ENCODE measurements at regions of chr21 and their contacts with region 1.

Region 1: GRCh38 chr21:26842976-26843932 is 2.0 kb downstream of the ADAMTS1 start:
- DNase-seq: peak; percentile 94
- H3K4me3 ChIP-seq: peak overlapping the region; percentile 38 to 77 (median 64)
- H3K27ac ChIP-seq: peak overlapping the region; percentile 80
- H3K4me1 ChIP-seq: peaks cover 35% of the 10 kb centered on the region
- H3K27me3 ChIP-seq: peaks cover 5 to 16% of the 10 kb centered on the region in 2 experiments
- CTCF ChIP-seq: peak; percentile 12 to 34
- POLR2A ChIP-seq: no peak

Region 2: DNA sequence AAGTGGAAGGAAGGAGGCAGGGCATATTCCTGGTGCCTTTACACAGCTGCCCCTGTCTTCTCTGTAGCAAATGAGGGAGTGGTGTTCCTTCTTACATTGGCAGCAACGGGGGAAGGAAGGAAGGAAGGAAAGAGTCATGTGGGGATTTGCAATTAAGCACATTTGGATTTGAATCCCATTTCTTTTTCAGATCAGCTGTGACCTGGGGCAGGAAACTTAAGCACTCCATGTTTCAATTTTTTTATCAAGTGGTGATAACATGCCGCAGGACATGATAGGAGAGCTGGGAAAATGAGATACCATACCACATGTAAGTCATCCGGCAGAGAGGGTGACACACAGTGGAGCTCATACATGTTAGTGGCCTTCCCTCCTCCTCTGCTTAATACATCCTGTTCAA is 859.5 kb before region 1 on chr21:
- CTCF ChIA-PET with region 1: no interaction called
- POLR2A ChIA-PET with region 1: no interaction called
- dilution Hi-C with region 1: no loop called
- intact Hi-C with region 1: loop called (anchors 10 kb)
- DNase-seq: peak; percentile 84
- H3K4me3 ChIP-seq: no peak overlapping the region
- H3K27ac ChIP-seq: peak overlapping the region; percentile 62
- H3K4me1 ChIP-seq: peaks cover 65% of the 10 kb centered on the region
- H3K27me3 ChIP-seq: no peaks in the 10 kb centered on the region
- CTCF ChIP-seq: no peak
- POLR2A ChIP-seq: peak; percentile 11

Region 3: GRCh38 chr21:26490771-26491170 is 352.5 kb before region 1 on chr21:
- CTCF ChIA-PET with region 1: no interaction called
- POLR2A ChIA-PET with region 1: no interaction called
- dilution Hi-C with region 1: no loop called
- intact Hi-C with region 1: no loop called
- DNase-seq: no peak
- H3K4me3 ChIP-seq: no peak overlapping the region
- H3K27ac ChIP-seq: no peak overlapping the region
- H3K4me1 ChIP-seq: no peaks in the 10 kb centered on the region
- H3K27me3 ChIP-seq: no peaks in the 10 kb centered on the region
- CTCF ChIP-seq: no peak
- POLR2A ChIP-seq: no peak

Region 4: GRCh38 chr21:26788790-26789189 is 54.5 kb before region 1 on chr21:
- CTCF ChIA-PET with region 1: no interaction called
- POLR2A ChIA-PET with region 1: no interaction called
- dilution Hi-C with region 1: no loop called
- intact Hi-C with region 1: no loop called
- DNase-seq: peak; percentile 7
- H3K4me3 ChIP-seq: no peak overlapping the region
- H3K27ac ChIP-seq: no peak overlapping the region
- H3K4me1 ChIP-seq: no peaks in the 10 kb centered on the region
- H3K27me3 ChIP-seq: no peaks in the 10 kb centered on the region
- CTCF ChIP-seq: no peak
- POLR2A ChIP-seq: no peak

Region 5: GRCh38 chr21:26814374-26814773 is 28.9 kb before region 1 on chr21:
- CTCF ChIA-PET with region 1: interaction called, 30 read pairs
- POLR2A ChIA-PET with region 1: no interaction called
- dilution Hi-C with region 1: no loop called
- intact Hi-C with region 1: no loop called
- DNase-seq: no peak
- H3K4me3 ChIP-seq: no peak overlapping the region
- H3K27ac ChIP-seq: no peak overlapping the region
- H3K4me1 ChIP-seq: no peaks in the 10 kb centered on the region
- H3K27me3 ChIP-seq: peaks cover 2% of the 10 kb centered on the region in 2 experiments
- CTCF ChIP-seq: no peak
- POLR2A ChIP-seq: no peak

Region 6: GRCh38 chr21:27700974-27701614 is 857.8 kb after region 1 on chr21:
- CTCF ChIA-PET with region 1: interaction called, 131 read pairs
- POLR2A ChIA-PET with region 1: no interaction called
- dilution Hi-C with region 1: no loop called
- intact Hi-C with region 1: no loop called
- DNase-seq: peak; percentile 81
- H3K4me3 ChIP-seq: no peak overlapping the region
- H3K27ac ChIP-seq: no peak overlapping the region
- H3K4me1 ChIP-seq: no peaks in the 10 kb centered on the region
- H3K27me3 ChIP-seq: no peaks in the 10 kb centered on the region
- CTCF ChIP-seq: peak; percentile 78 to 82
- POLR2A ChIP-seq: no peak

Region 7: DNA sequence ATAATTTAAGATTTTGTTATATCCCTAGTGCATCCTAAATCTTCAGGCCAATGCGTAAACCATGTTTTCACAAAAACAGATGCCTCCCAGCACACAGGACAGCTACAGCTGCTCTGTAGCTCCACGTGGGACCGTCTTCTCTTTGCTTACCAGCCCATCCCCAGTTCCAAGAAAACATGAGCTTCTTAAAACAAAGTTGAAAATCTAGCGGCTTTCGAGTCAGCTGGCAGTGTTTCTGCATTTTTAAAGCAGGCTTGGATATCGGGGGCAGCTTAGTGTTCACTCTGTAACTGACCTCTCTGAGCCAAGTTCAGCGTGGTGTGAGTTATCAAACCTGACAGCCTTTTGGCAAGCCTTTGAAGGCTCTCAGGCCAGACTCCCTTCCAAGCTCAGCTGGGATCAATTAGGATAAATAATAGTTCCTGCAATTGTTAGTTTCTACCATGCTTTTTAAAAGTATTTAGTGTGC is 1267.9 kb after region 1 on chr21:
- CTCF ChIA-PET with region 1: no interaction called
- POLR2A ChIA-PET with region 1: no interaction called
- dilution Hi-C with region 1: no loop called
- intact Hi-C with region 1: loop called (anchors 5 kb)
- DNase-seq: peak; percentile 85
- H3K4me3 ChIP-seq: peak overlapping the region in 1 of 3 experiments; percentile 46
- H3K27ac ChIP-seq: peak overlapping the region; percentile 1
- H3K4me1 ChIP-seq: peaks cover 14% of the 10 kb centered on the region
- H3K27me3 ChIP-seq: no peaks in the 10 kb centered on the region
- CTCF ChIP-seq: no peak
- POLR2A ChIP-seq: no peak

Region 8: DNA sequence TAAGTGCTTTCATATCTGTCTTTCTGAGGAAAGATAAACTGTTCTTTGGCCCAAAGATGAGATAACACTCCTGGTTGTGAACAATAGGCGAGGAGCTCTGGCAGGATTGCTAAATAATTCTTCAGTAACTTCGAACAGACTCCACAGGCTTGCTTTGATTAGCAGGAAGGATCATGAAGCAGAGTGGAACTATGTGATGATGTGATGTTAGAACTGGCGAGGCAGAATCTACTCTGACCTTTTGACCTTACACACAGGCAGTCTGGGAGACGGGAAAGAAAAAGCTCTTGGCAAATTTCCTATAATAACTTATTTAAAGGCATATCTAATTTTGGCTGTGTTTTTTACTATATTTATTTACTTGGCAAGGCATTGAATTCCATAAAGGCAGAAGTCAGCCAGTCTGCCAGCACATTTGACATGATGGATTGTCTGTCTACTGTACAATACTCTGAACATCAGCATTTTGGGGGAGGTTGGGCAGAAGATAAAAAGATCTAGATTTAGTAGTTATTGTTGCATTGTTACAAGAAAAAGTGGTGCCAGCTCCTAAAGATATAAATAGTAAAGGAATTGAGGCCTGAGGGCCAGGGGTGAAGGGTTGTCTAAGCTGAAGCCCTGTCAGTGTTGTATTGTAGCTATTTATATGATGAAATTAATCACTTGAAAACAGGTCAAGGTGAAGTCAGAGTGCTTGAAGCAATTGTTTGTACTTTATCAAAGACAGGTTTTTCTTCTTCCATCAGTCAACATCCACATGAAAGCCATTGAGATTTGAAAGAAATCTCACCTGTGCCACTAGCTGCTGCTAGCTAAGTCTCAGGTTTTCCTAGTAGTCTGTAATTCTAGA is 1440.6 kb after region 1 on chr21:
- CTCF ChIA-PET with region 1: no interaction called
- POLR2A ChIA-PET with region 1: interaction called, 3 read pairs
- dilution Hi-C with region 1: no loop called
- intact Hi-C with region 1: loop called (anchors 5 kb)
- DNase-seq: peak; percentile 97
- H3K4me3 ChIP-seq: peak overlapping the region in 1 of 3 experiments; percentile 17
- H3K27ac ChIP-seq: peak overlapping the region; percentile 79
- H3K4me1 ChIP-seq: peaks cover 21% of the 10 kb centered on the region
- H3K27me3 ChIP-seq: no peaks in the 10 kb centered on the region
- CTCF ChIP-seq: no peak
- POLR2A ChIP-seq: no peak

Region 9: GRCh38 chr21:28537371-28538079 is 1694.3 kb after region 1 on chr21:
- CTCF ChIA-PET with region 1: no interaction called
- POLR2A ChIA-PET with region 1: no interaction called
- dilution Hi-C with region 1: no loop called
- intact Hi-C with region 1: loop called (anchors 5 kb)
- DNase-seq: peak; percentile 82
- H3K4me3 ChIP-seq: no peak overlapping the region
- H3K27ac ChIP-seq: no peak overlapping the region
- H3K4me1 ChIP-seq: peaks cover 37% of the 10 kb centered on the region
- H3K27me3 ChIP-seq: no peaks in the 10 kb centered on the region
- CTCF ChIP-seq: no peak
- POLR2A ChIP-seq: no peak